K562 (cell line): ENCODE measurements at regions of chr3 and their contacts with region 1.

Region 1: DNA sequence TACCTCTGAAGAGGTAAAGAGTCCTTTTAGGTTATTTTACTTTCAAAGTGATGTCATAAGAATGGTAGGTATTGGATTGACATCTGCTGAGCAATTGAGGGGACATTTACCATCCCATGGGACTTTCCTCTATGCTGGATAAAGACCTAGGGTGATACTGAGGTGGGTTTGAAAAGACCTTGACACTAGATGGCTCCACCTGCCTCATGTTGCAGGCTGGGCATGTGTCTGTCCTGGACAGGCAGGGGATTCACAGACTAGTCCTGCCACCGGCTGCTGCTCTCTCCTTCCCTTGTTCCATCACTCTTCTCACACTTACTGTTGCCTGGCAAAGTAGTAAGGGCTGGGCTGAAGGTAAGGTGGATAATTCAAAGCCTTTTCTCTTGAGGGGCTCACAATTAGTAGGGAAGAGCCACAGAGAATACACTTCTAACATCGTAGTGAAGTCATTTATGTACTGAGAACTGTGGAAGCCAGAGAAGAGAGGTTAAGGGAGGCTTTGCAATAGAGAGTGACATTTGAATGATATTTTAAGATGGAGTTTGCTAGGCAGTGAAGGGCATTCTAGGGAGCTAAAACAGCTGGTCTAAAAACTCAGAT is 27.7 kb downstream of the TRAK1 start:
- DNase-seq: peak; percentile 42 to 67 (median 54)
- ATAC-seq: peak; percentile 90
- H3K4me3 ChIP-seq: no peak overlapping the region
- H3K27ac ChIP-seq: no peak overlapping the region
- H3K4me1 ChIP-seq: peaks cover 5 to 6% of the 10 kb centered on the region in 2 experiments; a peak in 4 of 5 replicates
- H3K27me3 ChIP-seq: no peaks in the 10 kb centered on the region
- CTCF ChIP-seq: peak; percentile 61 to 69 (median 69)
- EP300 ChIP-seq: no peak
- POLR2A ChIP-seq: no peak
- RAD21 ChIP-seq: peak in 1 of 2 experiments; percentile 77; a peak in 2 of 4 replicates

Region 2: GRCh38 chr3:41681479-41681878 is 437.4 kb before region 1 on chr3:
- CTCF ChIA-PET with region 1: no interaction called
- POLR2A ChIA-PET with region 1: no interaction called
- in situ Hi-C with region 1: loop called (anchors 25 kb)
- intact Hi-C with region 1: no loop called
- DNase-seq: no peak
- ATAC-seq: no peak
- H3K4me3 ChIP-seq: no peak overlapping the region
- H3K27ac ChIP-seq: no peak overlapping the region
- H3K4me1 ChIP-seq: no peaks in the 10 kb centered on the region
- H3K27me3 ChIP-seq: peaks cover 0 to 10% of the 10 kb centered on the region in 2 experiments; a peak in 1 of 5 replicates
- CTCF ChIP-seq: no peak
- EP300 ChIP-seq: no peak
- POLR2A ChIP-seq: no peak
- RAD21 ChIP-seq: no peak

Region 3: GRCh38 chr3:41893977-41894376 is 224.9 kb before region 1 on chr3:
- CTCF ChIA-PET with region 1: no interaction called
- POLR2A ChIA-PET with region 1: no interaction called
- in situ Hi-C with region 1: no loop called
- intact Hi-C with region 1: loop called (anchors 5 kb)
- DNase-seq: peak; percentile 19 to 52 (median 35)
- ATAC-seq: no peak
- H3K4me3 ChIP-seq: no peak overlapping the region
- H3K27ac ChIP-seq: no peak overlapping the region
- H3K4me1 ChIP-seq: no peaks in the 10 kb centered on the region
- H3K27me3 ChIP-seq: no peaks in the 10 kb centered on the region
- CTCF ChIP-seq: peak; percentile 33 to 77 (median 47); a peak in 3 of 6 replicates
- EP300 ChIP-seq: no peak
- POLR2A ChIP-seq: no peak
- RAD21 ChIP-seq: peak; percentile 80 to 87

Region 4: DNA sequence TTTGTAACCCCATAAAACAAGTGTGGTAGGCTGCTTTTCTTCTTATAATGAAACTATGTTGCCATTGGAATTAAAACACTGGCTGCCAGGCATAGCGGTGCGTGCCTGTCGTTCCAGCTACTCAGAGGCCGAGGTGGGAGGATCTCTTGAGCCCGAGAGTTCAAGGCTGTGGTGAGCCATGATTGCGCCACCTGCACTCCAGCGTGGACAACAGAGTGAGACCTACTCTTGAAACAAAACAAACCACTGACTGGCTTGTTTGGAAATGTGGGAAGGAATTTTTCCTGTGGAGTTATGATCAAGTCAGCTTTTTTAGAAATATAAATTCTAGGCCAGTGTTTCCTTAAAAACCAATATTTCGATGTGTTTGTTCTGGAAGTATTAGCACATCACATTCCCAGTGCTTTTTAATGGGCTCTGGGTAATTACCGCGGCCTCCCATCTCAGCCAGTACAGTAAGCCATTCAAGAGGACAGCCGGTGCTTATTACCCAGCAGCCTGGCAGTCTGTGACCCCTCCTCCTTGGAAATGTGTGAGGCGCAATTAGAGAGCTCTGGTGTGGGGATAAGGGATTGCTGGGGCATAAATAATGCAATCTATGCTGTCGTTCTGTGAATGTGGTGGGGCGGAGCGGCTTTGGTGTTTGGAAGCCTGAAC is 86.0 kb before region 1 on chr3:
- CTCF ChIA-PET with region 1: no interaction called
- POLR2A ChIA-PET with region 1: no interaction called
- in situ Hi-C with region 1: no loop called
- intact Hi-C with region 1: no loop called
- DNase-seq: peak in 1 of 4 experiments; percentile 55
- ATAC-seq: peak; percentile 69
- H3K4me3 ChIP-seq: no peak overlapping the region
- H3K27ac ChIP-seq: no peak overlapping the region
- H3K4me1 ChIP-seq: peaks cover 16 to 18% of the 10 kb centered on the region in 2 experiments; a peak in 4 of 5 replicates
- H3K27me3 ChIP-seq: no peaks in the 10 kb centered on the region
- CTCF ChIP-seq: no peak
- EP300 ChIP-seq: no peak
- POLR2A ChIP-seq: no peak
- RAD21 ChIP-seq: no peak; a peak in 1 of 4 replicates

Region 5: DNA sequence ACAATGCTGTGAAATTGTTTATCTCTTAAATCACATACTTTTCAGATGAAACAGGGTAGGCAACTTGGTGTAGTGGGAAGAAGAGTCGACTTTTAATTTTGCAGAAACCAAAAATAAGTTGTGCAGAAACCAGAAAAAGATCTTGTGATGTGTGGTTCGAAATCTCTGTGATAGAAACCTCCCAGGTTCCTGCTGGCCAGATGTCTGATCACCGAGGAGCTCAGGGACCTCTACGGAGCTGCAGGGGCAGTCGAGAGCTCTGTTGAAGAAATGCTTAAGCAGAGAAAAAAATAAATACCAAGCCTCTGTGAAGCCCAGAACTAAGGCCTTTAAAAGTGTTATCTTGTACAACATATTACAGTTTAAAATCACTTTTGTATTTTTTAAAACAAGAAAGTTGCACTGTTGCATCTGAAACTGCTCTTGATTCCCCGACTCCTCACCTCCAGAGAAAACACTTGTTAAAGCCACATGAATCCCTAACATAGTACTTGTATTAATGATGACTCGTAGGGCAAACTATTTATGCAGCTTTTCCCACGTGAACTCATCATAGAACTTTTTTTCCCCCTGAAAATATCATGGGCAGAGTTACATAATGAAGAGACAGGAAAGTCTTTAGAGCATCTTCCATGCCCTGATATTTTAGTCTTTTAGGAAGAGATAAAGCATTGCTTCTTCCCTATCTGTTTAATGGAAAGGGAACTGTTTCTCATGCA is 95.9 kb after region 1 on chr3:
- CTCF ChIA-PET with region 1: no interaction called
- POLR2A ChIA-PET with region 1: no interaction called
- in situ Hi-C with region 1: loop called (anchors 5 kb)
- intact Hi-C with region 1: no loop called
- DNase-seq: no peak
- ATAC-seq: no peak
- H3K4me3 ChIP-seq: no peak overlapping the region
- H3K27ac ChIP-seq: no peak overlapping the region
- H3K4me1 ChIP-seq: no peaks in the 10 kb centered on the region; a peak in 1 of 5 replicates
- H3K27me3 ChIP-seq: no peaks in the 10 kb centered on the region
- CTCF ChIP-seq: no peak
- EP300 ChIP-seq: no peak
- POLR2A ChIP-seq: no peak
- RAD21 ChIP-seq: no peak

Region 6: GRCh38 chr3:42443819-42444436 is 325.1 kb after region 1 on chr3:
- CTCF ChIA-PET with region 1: no interaction called
- POLR2A ChIA-PET with region 1: no interaction called
- in situ Hi-C with region 1: no loop called
- intact Hi-C with region 1: loop called (anchors 5 kb)
- DNase-seq: peak; percentile 84 to 90 (median 88)
- ATAC-seq: peak; percentile 99
- H3K4me3 ChIP-seq: no peak overlapping the region
- H3K27ac ChIP-seq: no peak overlapping the region
- H3K4me1 ChIP-seq: no peaks in the 10 kb centered on the region
- H3K27me3 ChIP-seq: peaks cover 8 to 24% of the 10 kb centered on the region in 2 experiments
- CTCF ChIP-seq: peak; percentile 94 to 98 (median 97)
- EP300 ChIP-seq: no peak
- POLR2A ChIP-seq: no peak
- RAD21 ChIP-seq: peak; percentile 94 to 97